ENCODE measurements at regions of chr5 and their contacts with region 1.

Region 1: DNA sequence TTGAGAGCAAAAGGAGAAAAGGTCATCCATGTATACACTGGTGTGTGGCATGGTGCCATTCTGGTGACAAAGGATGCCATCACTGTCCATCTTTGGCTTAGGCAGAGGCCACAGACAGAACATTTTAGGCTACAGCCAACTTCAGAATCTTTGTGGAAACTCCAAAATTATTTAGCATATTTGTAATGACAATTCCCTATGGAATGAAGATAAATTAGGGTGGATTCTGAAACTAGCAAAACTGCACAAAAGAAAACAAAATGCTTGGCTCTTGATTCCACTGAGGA is 92.5 kb downstream of the FBXW11 start:
- DNase-seq: no peak
- ATAC-seq: no peak

Region 2: GRCh38 chr5:172006321-172007174 is 92.6 kb after region 1 on chr5 and contains the start of gene FBXW11:
- intact Hi-C with region 1: loop called (anchors 2 kb)
- DNase-seq: peak; percentile 98
- ATAC-seq: peak; percentile 96
- total RNA-seq, gene FBXW11: 63.0 TPM

Region 3: GRCh38 chr5:172059661-172060100 is 145.8 kb after region 1 on chr5:
- intact Hi-C with region 1: loop called (anchors 2 kb)
- DNase-seq: no peak
- ATAC-seq: no peak

Region 4: DNA sequence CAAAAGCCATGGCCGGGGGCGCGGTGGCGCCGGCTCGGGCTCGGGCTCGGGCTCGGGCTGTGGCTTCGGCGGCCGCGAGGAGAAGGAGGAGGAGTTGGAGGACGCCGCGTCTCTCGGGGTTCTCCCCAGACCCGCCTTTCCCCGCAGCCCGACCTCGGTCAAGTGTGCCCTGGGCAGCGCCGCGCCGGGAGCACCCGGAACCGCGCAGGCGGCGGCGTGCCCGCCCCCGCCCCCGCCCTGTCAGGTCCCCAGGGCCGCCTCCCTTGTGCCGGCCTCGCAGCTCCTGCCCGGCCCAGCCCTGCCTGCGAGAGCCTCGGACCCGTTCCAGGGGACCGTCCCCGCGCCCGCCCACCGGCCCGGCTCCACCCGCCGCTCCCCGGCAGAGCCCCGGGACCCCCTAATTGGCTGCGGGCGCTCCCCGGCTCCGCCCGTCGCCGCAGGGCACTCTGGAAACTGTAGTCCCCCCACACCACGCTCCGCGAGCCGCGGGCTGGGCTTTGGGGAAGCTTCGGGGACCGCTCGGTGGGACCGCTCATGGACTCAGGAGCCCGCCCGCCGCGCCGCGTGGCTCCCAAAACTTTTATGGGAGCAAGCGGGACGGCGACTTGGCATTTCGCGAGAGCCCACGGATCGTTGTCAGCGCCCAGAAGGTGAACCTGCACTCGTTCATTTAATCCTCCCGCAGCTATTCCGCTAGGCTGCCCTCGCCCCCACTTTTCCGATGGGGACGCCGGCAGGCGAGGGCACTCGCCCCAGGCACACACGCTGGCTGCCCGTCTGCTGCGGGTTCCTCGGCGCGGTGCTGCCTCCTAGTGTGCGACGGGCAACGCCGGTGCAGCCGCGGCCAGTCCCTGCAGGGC is 274.3 kb after region 1 on chr5 and contains the start of gene STK10:
- intact Hi-C with region 1: loop called (anchors 5 kb)
- DNase-seq: peak; percentile 96
- ATAC-seq: peak; percentile 97
- total RNA-seq, gene STK10: 8.9 TPM